ENCODE measurements at regions of chr11 and their contacts with region 1.

Region 1: GRCh38 chr11:119084663-119085436 is at the start of gene HMBS:
- DNase-seq: peak; percentile 94
- ATAC-seq: peak; percentile 96
- H3K4me3 ChIP-seq: peak within 1 kb of the TSS; percentile 74
- H3K27ac ChIP-seq: peak within 1 kb of the TSS; percentile 85
- H3K4me1 ChIP-seq: peaks cover 5% of the 10 kb centered on the region
- H3K27me3 ChIP-seq: no peaks in the 10 kb centered on the region
- CTCF ChIP-seq: no peak
- POLR2A ChIP-seq: peak; percentile 68; the same call in 1 of the 2 replicates
- RAD21 ChIP-seq: no peak
- total RNA-seq, gene HMBS: 13.9 and 17.9 TPM in 2 replicates

Region 2: DNA sequence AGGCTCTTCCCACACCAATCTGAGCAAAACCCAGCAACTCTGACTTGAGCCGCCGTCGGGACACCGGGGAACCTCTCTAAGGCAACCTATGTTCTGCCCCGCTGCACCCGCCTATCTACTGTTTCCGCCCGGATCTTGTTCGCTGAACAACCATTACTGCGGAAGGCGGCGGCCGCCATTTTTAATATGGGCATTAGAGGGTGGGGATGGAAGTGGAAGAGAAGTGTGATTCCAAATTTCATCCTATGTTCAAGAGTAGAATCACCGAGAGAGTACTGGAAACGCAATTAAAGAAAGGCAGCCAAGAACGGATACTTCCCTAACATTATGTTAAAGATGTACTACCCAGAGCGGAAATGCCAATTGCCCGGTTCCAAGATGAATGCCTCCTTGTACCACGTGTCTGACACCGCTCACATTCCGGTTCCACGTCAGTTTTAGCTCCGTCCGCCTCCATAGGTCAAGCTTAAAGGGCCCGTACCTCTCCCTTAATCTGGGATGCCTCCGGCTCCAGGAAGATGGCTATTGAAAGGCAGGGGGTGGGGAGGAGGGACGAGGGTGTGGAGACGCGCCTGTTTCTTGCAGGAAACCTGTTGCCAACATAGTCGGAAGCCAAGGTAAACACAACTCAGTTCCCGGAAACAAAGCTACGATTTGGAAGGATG is 17.0 kb after region 1 on chr11 and contains the start of gene DPAGT1:
- CTCF ChIA-PET with region 1: interaction called, 3 read pairs
- POLR2A ChIA-PET with region 1: interaction called, 11 read pairs
- dilution Hi-C with region 1: no loop called
- in situ Hi-C with region 1: no loop called
- intact Hi-C with region 1: no loop called
- DNase-seq: peak; percentile 97
- ATAC-seq: peak; percentile 86
- H3K4me3 ChIP-seq: peak within 1 kb of the TSS; percentile 72
- H3K27ac ChIP-seq: peak within 1 kb of the TSS; percentile 80
- H3K4me1 ChIP-seq: peaks cover 8% of the 10 kb centered on the region
- H3K27me3 ChIP-seq: no peaks in the 10 kb centered on the region
- CTCF ChIP-seq: no peak
- POLR2A ChIP-seq: peak; percentile 41; the same call in 1 of the 2 replicates
- RAD21 ChIP-seq: no peak
- total RNA-seq, gene DPAGT1: 13.6 and 15.2 TPM in 2 replicates

Region 3: GRCh38 chr11:119175493-119176077 is 90.7 kb after region 1 on chr11:
- CTCF ChIA-PET with region 1: no interaction called
- POLR2A ChIA-PET with region 1: no interaction called
- dilution Hi-C with region 1: no loop called
- in situ Hi-C with region 1: no loop called
- intact Hi-C with region 1: no loop called
- DNase-seq: peak; percentile 58
- ATAC-seq: peak; percentile 80
- H3K4me3 ChIP-seq: no peak overlapping the region
- H3K27ac ChIP-seq: no peak overlapping the region
- H3K4me1 ChIP-seq: peaks cover 5% of the 10 kb centered on the region
- H3K27me3 ChIP-seq: no peaks in the 10 kb centered on the region
- CTCF ChIP-seq: no peak
- POLR2A ChIP-seq: no peak
- RAD21 ChIP-seq: no peak

Region 4: DNA sequence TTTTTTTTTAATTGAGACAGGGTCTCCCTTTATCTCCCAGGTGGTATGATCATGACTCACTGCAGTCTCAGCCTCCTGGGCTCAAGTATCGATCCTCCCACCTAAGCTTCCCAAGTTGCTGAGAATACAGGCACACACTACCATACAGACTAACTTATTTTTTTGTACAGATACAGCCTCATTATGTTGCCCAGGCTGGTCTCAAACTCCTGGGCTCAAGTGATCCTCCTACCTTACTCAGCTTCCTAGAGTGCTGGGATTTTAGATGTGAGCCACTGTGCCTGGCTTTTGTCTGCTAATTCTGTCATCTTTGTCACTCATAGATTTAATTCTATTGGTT is 164.8 kb after region 1 on chr11:
- CTCF ChIA-PET with region 1: no interaction called
- POLR2A ChIA-PET with region 1: no interaction called
- dilution Hi-C with region 1: no loop called
- in situ Hi-C with region 1: no loop called
- intact Hi-C with region 1: no loop called
- DNase-seq: peak; percentile 17
- ATAC-seq: no peak
- H3K4me3 ChIP-seq: no peak overlapping the region
- H3K27ac ChIP-seq: no peak overlapping the region
- H3K4me1 ChIP-seq: peaks cover 5% of the 10 kb centered on the region; the same call in 1 of the 2 replicates
- H3K27me3 ChIP-seq: no peaks in the 10 kb centered on the region
- CTCF ChIP-seq: no peak
- POLR2A ChIP-seq: no peak
- RAD21 ChIP-seq: no peak